Activated naive CD4-positive, alpha-beta T cell treated with anti-CD3 and anti-CD28 coated beads for 36 hours (primary cell): ENCODE measurements at regions of chr18 and their contacts with region 1.

Region 1: DNA sequence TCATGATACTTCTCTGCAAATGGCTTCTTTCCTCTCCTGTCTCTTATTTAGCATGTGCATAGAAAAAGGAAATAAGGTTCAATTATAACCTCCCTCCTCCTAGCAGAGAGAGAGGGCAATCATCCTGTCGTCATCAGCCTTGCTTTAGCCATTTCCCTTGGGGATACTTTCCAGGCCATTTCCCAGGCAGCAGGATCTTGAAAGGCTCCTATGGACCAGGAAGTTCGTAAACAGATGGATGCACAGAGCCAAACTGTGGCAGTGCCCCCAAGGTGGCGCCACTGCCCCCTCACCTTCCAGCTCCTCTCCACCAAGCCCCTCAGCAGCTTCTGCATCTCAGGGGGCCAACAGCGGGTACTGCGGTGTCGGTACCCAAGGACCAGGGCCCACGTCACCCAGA is 157.4 kb downstream of the DTNA start:
- DNase-seq: no peak
- H3K4me3 Mint-ChIP-seq: no peak overlapping the region
- H3K27ac Mint-ChIP-seq: peak overlapping the region; percentile 53
- H3K4me1 Mint-ChIP-seq: peaks cover 51% of the 10 kb centered on the region
- H3K27me3 Mint-ChIP-seq: no peaks in the 10 kb centered on the region

Region 2: DNA sequence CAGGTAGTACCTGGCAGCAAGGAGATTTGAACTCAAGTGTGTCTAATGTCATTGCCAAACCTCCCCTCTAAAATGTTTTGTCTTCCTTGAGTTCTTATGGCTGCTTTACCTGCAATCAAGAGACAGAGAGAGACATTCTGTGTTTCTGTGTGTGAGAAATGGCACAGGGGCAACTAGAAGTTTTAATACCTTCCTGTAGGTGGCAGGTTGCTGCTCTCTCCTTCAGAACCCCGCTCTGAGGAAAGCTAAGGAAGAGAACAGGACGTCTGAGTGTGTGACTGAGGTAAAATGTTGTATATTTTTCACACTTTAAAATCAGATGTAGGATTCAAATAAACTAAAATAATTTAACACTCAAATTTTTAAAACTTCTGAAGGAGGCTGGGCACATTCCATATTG is 138.3 kb before region 1 on chr18:
- CTCF ChIA-PET with region 1: no interaction called
- intact Hi-C with region 1: no loop called
- DNase-seq: peak; percentile 9
- H3K4me3 Mint-ChIP-seq: no peak overlapping the region
- H3K27ac Mint-ChIP-seq: no peak overlapping the region
- H3K4me1 Mint-ChIP-seq: peaks cover 3% of the 10 kb centered on the region
- H3K27me3 Mint-ChIP-seq: peaks cover 10% of the 10 kb centered on the region

Region 3: GRCh38 chr18:34993289-34993688 is 125.8 kb after region 1 on chr18:
- CTCF ChIA-PET with region 1: no interaction called
- intact Hi-C with region 1: loop called (anchors 1 kb)
- DNase-seq: no peak
- H3K4me3 Mint-ChIP-seq: no peak overlapping the region
- H3K27ac Mint-ChIP-seq: no peak overlapping the region
- H3K4me1 Mint-ChIP-seq: peaks cover 9% of the 10 kb centered on the region
- H3K27me3 Mint-ChIP-seq: no peaks in the 10 kb centered on the region

Region 4: GRCh38 chr18:35376742-35377695 is 509.5 kb after region 1 on chr18 and contains the start of gene ZNF396:
- CTCF ChIA-PET with region 1: no interaction called
- intact Hi-C with region 1: loop called (anchors 10 kb)
- DNase-seq: peak; percentile 83
- H3K4me3 Mint-ChIP-seq: peak within 1 kb of the TSS; percentile 79
- H3K27ac Mint-ChIP-seq: peak within 1 kb of the TSS; percentile 13
- H3K4me1 Mint-ChIP-seq: peaks cover 6% of the 10 kb centered on the region
- H3K27me3 Mint-ChIP-seq: no peaks in the 10 kb centered on the region
- total RNA-seq, gene ZNF396: 0.74 to 0.77 TPM

Region 5: DNA sequence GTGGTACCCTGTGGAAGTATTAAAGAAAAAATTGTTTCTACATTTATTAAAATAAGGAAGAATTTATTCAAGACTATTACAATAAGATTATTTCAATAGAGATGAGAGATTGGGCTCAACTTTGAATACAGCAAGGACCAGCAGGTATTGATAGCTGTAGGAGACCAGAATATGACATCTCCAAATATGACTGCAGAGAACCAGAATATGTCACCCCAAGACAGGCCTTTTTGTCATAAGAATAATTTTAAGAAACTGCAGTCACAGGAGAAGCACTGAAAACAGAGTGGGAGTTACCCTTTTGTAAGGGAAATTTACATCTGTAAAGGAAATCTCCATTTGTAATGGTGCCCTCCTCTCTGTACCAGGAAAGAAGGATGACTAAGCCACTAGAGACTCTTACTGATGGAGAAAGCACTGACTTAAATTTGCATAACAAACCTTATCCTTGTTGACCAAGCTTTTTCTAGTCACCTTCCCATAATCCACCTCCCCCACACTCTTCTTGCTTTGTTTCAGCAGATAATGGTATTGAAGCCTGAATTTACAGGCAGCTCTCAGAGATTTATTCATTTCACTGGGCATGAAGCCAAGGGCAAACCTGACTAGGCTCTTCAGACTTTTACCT is 959.9 kb after region 1 on chr18:
- CTCF ChIA-PET with region 1: no interaction called
- intact Hi-C with region 1: loop called (anchors 10 kb)
- DNase-seq: peak; percentile 62
- H3K4me3 Mint-ChIP-seq: no peak overlapping the region
- H3K27ac Mint-ChIP-seq: peak overlapping the region; percentile 75
- H3K4me1 Mint-ChIP-seq: peaks cover 15% of the 10 kb centered on the region
- H3K27me3 Mint-ChIP-seq: peaks cover 22% of the 10 kb centered on the region